Activated naive CD8-positive, alpha-beta T cell treated with anti-CD3 and anti-CD28 coated beads, Interleukin-2, amount 10 ng/mL, durations not matched to agents 7 days and 5 days (primary cell): ENCODE measurements at regions of chr19 and their contacts with region 1.

Region 1: GRCh38 chr19:21020298-21021227 is at the start of gene ZNF430:
- DNase-seq: peak; percentile 83
- ATAC-seq: peak; percentile 97
- H3K4me3 Mint-ChIP-seq: peak within 1 kb of the TSS; percentile 99
- H3K27ac Mint-ChIP-seq: peak within 1 kb of the TSS; percentile 100
- H3K4me1 Mint-ChIP-seq: peaks cover 24% of the 10 kb centered on the region
- H3K27me3 Mint-ChIP-seq: no peaks in the 10 kb centered on the region
- total RNA-seq, gene ZNF430: 33.9 to 35.0 TPM

Region 2: DNA sequence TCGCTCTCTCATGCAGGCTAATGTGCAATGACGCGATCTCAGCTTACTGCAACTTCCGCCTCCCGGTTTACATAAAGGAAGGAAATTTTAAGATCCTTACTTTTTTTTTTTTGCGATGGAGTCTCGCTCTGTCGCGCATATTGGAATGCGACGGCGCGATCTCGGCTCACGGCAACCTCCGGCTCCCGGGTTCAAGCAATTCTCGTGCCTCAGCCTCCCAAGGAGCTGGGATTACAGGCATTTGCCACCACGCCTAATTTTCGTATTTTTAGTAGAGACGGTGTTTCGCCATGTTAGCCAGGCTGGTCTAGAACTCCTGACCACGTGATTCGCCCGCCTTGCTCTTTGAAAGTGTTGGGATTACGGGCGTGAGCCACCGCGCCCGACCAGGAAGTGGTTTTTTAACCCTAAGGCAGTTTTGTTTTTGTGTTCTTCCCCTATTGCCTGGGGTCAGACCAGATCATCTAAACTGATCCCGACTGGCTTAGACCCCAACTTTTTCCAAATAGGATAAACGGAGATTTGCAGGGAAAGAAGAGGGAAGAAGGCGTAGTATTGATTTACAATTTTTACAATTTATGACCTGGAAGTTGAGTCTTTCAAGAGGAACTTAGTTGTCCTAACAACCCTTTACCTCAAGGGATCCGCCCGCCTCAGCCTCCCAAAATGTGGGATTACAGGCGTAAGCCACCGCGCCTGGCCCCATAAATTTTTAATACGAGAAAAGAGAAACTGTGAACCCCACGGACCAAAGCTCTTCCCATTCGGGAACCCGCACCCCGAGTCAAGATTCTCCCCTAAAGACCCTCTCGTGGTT is 597.0 kb before region 1 on chr19:
- POLR2A ChIA-PET with region 1: interaction called, 10 read pairs
- DNase-seq: peak; percentile 52
- ATAC-seq: no peak
- H3K4me3 Mint-ChIP-seq: peak overlapping the region; percentile 96
- H3K27ac Mint-ChIP-seq: peak overlapping the region; percentile 98
- H3K4me1 Mint-ChIP-seq: peaks cover 8% of the 10 kb centered on the region
- H3K27me3 Mint-ChIP-seq: no peaks in the 10 kb centered on the region

Region 3: GRCh38 chr19:20863176-20863575 is 157.4 kb before region 1 on chr19:
- POLR2A ChIA-PET with region 1: no interaction called
- DNase-seq: no peak
- ATAC-seq: no peak
- H3K4me3 Mint-ChIP-seq: no peak overlapping the region
- H3K27ac Mint-ChIP-seq: no peak overlapping the region
- H3K4me1 Mint-ChIP-seq: no peaks in the 10 kb centered on the region
- H3K27me3 Mint-ChIP-seq: no peaks in the 10 kb centered on the region

Region 4: DNA sequence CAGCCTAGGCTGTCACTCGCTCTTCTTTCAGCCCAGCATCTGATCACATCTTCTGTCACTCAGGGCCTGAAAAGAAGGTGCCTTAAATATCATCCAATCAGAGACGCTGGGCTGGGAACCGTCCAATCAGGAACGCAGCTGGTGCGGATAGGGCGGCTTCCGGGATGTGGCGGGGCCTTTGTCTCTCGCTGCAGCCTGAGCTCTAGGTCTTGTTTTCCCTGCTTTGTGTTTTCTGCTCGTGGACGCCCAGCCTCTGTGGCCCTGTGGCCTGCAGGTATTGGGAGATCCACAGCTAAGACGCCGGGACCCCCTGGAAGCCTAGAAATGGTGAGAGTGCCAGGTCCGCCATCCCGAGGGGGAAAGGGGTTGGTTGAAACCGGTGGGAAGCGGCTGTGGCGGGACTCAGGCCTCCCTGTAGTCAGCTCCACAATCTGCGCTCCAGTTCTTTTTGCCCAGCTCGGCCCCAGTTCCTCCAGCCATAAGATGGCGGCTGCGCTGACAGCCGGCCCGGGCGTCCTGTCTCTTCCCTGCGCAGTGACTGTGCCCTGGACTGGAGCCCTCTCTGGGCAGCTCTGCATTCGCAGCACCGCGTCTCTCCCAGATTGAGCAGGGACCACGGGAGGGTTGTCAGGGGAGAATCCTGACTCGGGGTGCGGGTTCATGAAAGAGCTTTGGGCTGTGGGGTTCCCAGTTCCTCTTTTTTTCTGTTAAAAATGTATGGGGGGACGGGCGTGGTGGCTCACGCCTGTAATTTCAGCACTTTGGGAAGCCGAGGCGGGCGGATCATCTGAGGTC is 97.3 kb before region 1 on chr19 and contains the start of gene ZNF85:
- POLR2A ChIA-PET with region 1: interaction called, 13 read pairs
- DNase-seq: peak; percentile 85
- ATAC-seq: peak; percentile 99
- H3K4me3 Mint-ChIP-seq: peak within 1 kb of the TSS; percentile 97
- H3K27ac Mint-ChIP-seq: peak within 1 kb of the TSS; percentile 99
- H3K4me1 Mint-ChIP-seq: peaks cover 13% of the 10 kb centered on the region
- H3K27me3 Mint-ChIP-seq: no peaks in the 10 kb centered on the region
- total RNA-seq, gene ZNF85: 22.7 to 25.0 TPM

Region 5: GRCh38 chr19:20964798-20965197 is 55.8 kb before region 1 on chr19:
- POLR2A ChIA-PET with region 1: no interaction called
- DNase-seq: no peak
- ATAC-seq: no peak
- H3K4me3 Mint-ChIP-seq: no peak overlapping the region
- H3K27ac Mint-ChIP-seq: no peak overlapping the region
- H3K4me1 Mint-ChIP-seq: no peaks in the 10 kb centered on the region
- H3K27me3 Mint-ChIP-seq: no peaks in the 10 kb centered on the region

Region 6: DNA sequence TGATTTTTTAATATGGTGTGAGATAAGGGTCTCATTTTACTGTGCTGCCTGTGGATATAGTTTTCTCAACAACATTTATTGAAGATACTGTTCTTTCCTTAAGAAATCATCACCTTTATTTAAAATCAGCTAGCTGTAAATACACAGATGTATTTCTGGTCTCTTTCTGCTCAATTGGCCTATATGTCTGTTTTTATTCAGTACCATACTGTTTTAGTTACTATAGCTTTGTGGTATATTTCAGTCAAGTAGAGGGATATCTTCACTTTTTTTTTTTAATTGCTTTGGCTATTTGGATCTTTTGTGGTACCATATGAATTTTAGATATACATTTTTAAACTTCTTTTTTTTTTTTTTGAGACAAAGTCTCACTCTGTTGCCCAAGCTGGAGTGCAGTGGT is 44.8 kb after region 1 on chr19:
- POLR2A ChIA-PET with region 1: no interaction called
- DNase-seq: no peak
- ATAC-seq: no peak
- H3K4me3 Mint-ChIP-seq: no peak overlapping the region
- H3K27ac Mint-ChIP-seq: no peak overlapping the region
- H3K4me1 Mint-ChIP-seq: no peaks in the 10 kb centered on the region
- H3K27me3 Mint-ChIP-seq: no peaks in the 10 kb centered on the region

Region 7: GRCh38 chr19:21082011-21082975 is 61.7 kb after region 1 on chr19 and contains the start of gene ZNF714:
- POLR2A ChIA-PET with region 1: interaction called, 28 read pairs
- DNase-seq: peak; percentile 79
- ATAC-seq: peak; percentile 99
- H3K4me3 Mint-ChIP-seq: peak within 1 kb of the TSS; percentile 100
- H3K27ac Mint-ChIP-seq: peak within 1 kb of the TSS; percentile 99
- H3K4me1 Mint-ChIP-seq: peaks cover 13% of the 10 kb centered on the region
- H3K27me3 Mint-ChIP-seq: no peaks in the 10 kb centered on the region
- total RNA-seq, gene ZNF714: 25.1 to 26.6 TPM

Region 8: DNA sequence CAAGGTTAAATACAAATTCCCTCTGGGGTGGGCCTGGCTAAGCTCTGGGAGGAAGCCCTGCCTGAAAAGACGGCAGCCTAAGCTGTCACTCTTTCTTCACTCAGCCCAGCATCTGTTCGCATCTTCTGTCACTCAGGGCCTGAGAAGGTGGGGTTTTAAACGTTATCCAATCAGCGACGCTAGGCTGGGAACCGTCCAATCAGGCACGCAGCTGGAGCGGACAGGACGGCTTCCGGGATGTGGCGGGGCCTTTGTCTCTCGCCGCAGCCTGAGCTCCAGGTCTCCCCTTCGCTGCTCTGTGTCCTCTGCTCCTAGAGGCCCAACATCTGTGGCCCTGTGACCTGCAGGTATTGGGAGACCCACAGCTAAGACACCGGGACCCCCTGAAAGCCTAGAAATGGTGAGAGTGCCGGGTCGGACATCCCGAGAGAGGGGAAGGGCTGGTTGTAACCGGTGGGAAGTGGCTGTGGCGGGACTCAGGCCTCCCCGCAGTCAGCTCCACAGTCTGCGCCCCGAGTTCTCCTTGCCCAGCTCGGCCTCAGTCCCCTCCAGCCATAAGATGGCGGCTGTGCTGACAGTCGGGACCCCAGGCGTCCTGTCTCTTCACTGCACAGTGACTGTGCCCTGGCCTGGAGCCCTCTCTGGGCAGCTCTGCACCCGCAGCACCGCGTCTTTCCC is 121.4 kb after region 1 on chr19 and contains the start of gene ZNF431:
- POLR2A ChIA-PET with region 1: interaction called, 10 read pairs
- DNase-seq: peak; percentile 84
- ATAC-seq: peak; percentile 99
- H3K4me3 Mint-ChIP-seq: peak within 1 kb of the TSS; percentile 96
- H3K27ac Mint-ChIP-seq: peak within 1 kb of the TSS; percentile 97
- H3K4me1 Mint-ChIP-seq: peaks cover 15% of the 10 kb centered on the region
- H3K27me3 Mint-ChIP-seq: no peaks in the 10 kb centered on the region
- total RNA-seq, gene ZNF431: 21.5 to 28.2 TPM